Activated CD4-positive, alpha-beta T cell treated with anti-CD3 and anti-CD28 coated beads for 36 hours (primary cell): ENCODE measurements at regions of chr2 and their contacts with region 1.

Region 1: DNA sequence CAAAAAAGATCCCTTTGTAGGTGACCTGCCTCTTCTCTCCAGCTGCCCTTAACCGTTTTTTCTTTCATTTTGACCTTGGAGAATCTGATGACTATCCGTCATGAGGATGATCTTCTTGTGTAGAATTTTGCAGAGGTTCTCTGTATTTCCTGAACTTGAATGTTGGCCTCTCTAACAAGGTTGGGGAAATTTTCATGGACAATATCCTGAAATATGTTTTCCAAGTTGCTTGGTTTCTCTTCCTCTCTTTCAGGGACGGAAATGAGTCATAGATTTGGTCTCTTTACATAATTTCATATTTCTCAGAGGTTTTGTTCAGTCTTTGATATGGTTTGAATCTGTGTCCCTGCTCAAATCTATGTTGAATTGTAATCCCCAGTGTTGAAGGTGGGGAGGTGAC is 34.0 kb downstream of the ZC3H8 start:
- DNase-seq: no peak
- ATAC-seq: no peak
- H3K4me3 Mint-ChIP-seq: no peak overlapping the region
- H3K27ac Mint-ChIP-seq: no peak overlapping the region
- H3K4me1 Mint-ChIP-seq: peaks cover 12% of the 10 kb centered on the region
- H3K27me3 Mint-ChIP-seq: no peaks in the 10 kb centered on the region

Region 2: DNA sequence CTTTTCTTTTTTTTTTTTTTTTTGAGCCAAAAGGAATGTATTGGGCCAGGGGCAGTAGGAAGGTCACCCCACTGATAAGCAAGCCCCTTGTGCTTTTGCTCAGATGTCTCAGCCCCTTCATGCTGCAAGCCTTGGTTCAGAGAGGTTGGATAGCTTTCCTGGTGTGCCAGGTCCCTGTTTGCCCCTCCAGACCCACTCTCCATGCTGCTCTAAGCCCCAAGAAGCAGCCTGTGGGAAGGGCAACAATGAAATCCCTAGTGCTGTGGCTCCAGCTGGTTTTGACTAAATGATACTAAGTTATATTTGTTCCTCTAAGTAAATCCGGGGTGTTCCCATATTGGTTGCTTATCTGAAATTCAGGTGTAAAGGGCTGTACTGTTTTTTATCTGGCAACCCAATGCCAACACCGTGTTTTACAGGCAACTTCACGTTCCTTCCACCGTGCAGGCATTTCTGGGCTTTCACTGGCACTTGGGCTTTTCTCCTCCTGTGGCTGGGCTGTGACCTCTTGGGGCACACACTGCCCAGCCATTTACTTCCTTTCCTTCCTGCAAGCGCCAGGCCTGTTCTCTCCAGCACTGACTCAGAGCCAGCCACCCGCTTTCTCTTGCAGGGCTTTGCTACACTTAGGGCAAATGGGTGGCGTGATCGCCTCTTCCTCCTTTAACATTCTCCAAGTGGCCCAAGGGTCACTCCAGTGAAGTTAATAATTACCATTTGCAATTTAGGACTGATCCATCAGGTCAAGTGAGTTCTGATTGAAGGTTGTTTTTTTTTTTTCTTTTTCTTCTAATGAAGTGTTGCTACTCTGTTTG is 300.8 kb before region 1 on chr2:
- CTCF ChIA-PET with region 1: no interaction called
- POLR2A ChIA-PET with region 1: no interaction called
- intact Hi-C with region 1: no loop called
- DNase-seq: no peak
- ATAC-seq: no peak
- H3K4me3 Mint-ChIP-seq: no peak overlapping the region
- H3K27ac Mint-ChIP-seq: no peak overlapping the region
- H3K4me1 Mint-ChIP-seq: no peaks in the 10 kb centered on the region
- H3K27me3 Mint-ChIP-seq: peaks cover 2% of the 10 kb centered on the region

Region 3: GRCh38 chr2:112173646-112174319 is 47.0 kb before region 1 on chr2:
- CTCF ChIA-PET with region 1: no interaction called
- POLR2A ChIA-PET with region 1: no interaction called
- intact Hi-C with region 1: loop called in 1 of 2 experiments (anchors 5 kb)
- DNase-seq: no peak
- ATAC-seq: peak; percentile 65
- H3K4me3 Mint-ChIP-seq: no peak overlapping the region
- H3K27ac Mint-ChIP-seq: peak overlapping the region; percentile 64
- H3K4me1 Mint-ChIP-seq: peaks cover 29% of the 10 kb centered on the region
- H3K27me3 Mint-ChIP-seq: no peaks in the 10 kb centered on the region